Naive thymus-derived CD4-positive, alpha-beta T cell (primary cell): ENCODE measurements at regions of chr3 and their contacts with region 1.

Region 1: DNA sequence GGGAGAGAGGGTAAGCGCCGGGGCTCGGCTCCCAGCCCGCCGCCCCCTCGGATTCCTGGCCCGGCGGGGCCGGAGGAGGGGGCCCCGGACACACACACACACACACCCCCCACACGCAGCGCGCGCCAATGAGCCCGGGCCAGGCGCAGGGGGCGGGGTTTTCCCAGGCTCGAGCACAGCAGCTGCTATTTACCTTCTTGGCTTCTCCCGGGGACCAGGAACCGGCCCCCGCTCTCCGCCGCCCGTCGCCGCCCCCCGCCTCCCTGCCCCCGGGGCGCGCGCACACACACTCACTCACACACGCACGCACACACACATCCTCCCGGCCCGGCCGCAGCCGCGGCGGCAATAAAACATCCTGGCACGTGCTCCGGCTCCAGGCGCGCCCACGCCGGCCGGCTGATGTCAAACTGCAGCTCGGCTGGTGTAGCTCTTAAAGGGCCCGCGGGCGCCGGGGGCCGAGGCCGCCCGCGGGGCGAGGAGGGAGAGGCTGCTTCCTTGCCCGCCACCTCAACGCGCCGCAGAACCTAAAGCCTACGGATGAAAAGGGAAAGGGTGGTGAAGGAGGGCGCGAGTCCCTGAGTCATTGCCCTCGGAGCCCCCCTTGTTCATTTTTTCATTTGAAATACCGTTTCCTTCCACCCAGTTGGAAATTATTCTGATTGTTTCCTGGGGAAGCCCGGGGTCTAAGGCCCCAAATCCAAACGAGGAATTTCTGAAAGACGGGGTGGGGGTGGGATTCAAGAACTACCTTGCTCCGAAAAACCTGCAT is 1.0 kb upstream of the HES1 start:
- DNase-seq: peak; percentile 66 to 84 (median 82)
- ATAC-seq: peak; percentile 79
- H3K4me3 ChIP-seq: peak overlapping the region; percentile 53
- H3K4me3 Mint-ChIP-seq: peak overlapping the region; percentile 84 to 93 (median 90)
- H3K27ac ChIP-seq: peak overlapping the region; percentile 8
- H3K27ac Mint-ChIP-seq: peak overlapping the region in 8 of 9 donors; percentile 79 to 94 (median 92)
- H3K4me1 ChIP-seq: peaks cover 25 to 42% of the 10 kb centered on the region in 2 donors
- H3K4me1 Mint-ChIP-seq: peaks cover 41 to 66% (median 50%) of the 10 kb centered on the region in 7 donors
- H3K27me3 ChIP-seq: peaks cover 6 to 8% of the 10 kb centered on the region in 2 donors
- H3K27me3 Mint-ChIP-seq: peaks cover 0 to 80% (median 34%) of the 10 kb centered on the region in 5 donors

Region 2: GRCh38 chr3:192892981-192893700 is 1241.8 kb before region 1 on chr3:
- CTCF ChIA-PET with region 1: no interaction called
- POLR2A ChIA-PET with region 1: no interaction called
- intact Hi-C with region 1: loop called in 1 of 2 experiments (anchors 10 kb)
- DNase-seq: peak in 8 of 9 donors; percentile 20 to 68 (median 41)
- ATAC-seq: peak; percentile 89
- H3K4me3 ChIP-seq: peak overlapping the region; percentile 29
- H3K4me3 Mint-ChIP-seq: peak overlapping the region; percentile 39 to 87 (median 74)
- H3K27ac ChIP-seq: peak overlapping the region; percentile 73
- H3K27ac Mint-ChIP-seq: peak overlapping the region; percentile 77 to 95 (median 91)
- H3K4me1 ChIP-seq: peaks cover 4 to 21% of the 10 kb centered on the region in 2 donors
- H3K4me1 Mint-ChIP-seq: peaks cover 15 to 91% (median 46%) of the 10 kb centered on the region in 7 donors
- H3K27me3 ChIP-seq: no peaks in the 10 kb centered on the region
- H3K27me3 Mint-ChIP-seq: peaks cover 0 to 20% (median 3%) of the 10 kb centered on the region in 5 donors

Region 3: DNA sequence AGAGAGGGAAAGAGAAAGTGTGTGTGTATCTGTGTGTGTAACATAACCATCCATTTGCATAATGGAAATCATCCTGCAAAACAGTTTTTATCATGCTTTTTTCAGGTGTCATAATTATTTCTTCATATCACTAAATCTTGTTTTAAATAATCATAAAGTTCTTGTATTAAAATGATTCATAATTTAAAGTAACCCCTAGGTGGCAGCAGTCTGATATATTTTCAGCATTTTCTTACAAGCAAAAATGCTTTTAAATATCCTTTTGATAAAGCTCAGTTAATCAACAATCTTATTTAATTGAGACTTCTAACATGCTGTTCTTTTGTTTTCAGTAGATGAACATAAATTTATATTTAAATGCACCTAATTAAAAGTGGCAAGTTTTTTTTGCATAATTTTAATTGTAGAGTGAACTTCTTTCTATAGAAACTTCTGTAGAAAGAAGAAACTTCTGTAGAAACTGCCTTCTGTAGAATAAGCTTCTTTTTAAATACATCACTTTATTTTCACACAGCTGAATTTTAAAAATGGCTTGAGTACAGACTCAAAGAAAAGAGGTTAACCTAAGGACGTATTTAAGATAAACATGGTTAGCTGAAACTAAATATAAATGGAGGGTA is 469.5 kb before region 1 on chr3:
- CTCF ChIA-PET with region 1: interaction called, 12 read pairs
- POLR2A ChIA-PET with region 1: no interaction called
- intact Hi-C with region 1: loop called in 1 of 2 experiments (anchors 5 kb)
- DNase-seq: peak in 6 of 9 donors; percentile 4 to 43 (median 24)
- ATAC-seq: no peak
- H3K4me3 ChIP-seq: no peak overlapping the region
- H3K4me3 Mint-ChIP-seq: no peak overlapping the region
- H3K27ac ChIP-seq: no peak overlapping the region
- H3K27ac Mint-ChIP-seq: no peak overlapping the region
- H3K4me1 ChIP-seq: no peaks in the 10 kb centered on the region
- H3K4me1 Mint-ChIP-seq: no peaks in the 10 kb centered on the region
- H3K27me3 ChIP-seq: no peaks in the 10 kb centered on the region
- H3K27me3 Mint-ChIP-seq: no peaks in the 10 kb centered on the region

Region 4: GRCh38 chr3:193971261-193971751 is 163.6 kb before region 1 on chr3:
- CTCF ChIA-PET with region 1: no interaction called
- POLR2A ChIA-PET with region 1: no interaction called
- intact Hi-C with region 1: loop called (anchors 1 to 10 kb)
- DNase-seq: no peak
- ATAC-seq: peak; percentile 86
- H3K4me3 ChIP-seq: no peak overlapping the region
- H3K4me3 Mint-ChIP-seq: peak overlapping the region in 7 of 10 donors; percentile 18 to 67 (median 51)
- H3K27ac ChIP-seq: no peak overlapping the region
- H3K27ac Mint-ChIP-seq: no peak overlapping the region
- H3K4me1 ChIP-seq: peaks cover 0 to 10% of the 10 kb centered on the region in 2 donors
- H3K4me1 Mint-ChIP-seq: peaks cover 0 to 28% (median 20%) of the 10 kb centered on the region in 7 donors
- H3K27me3 ChIP-seq: no peaks in the 10 kb centered on the region
- H3K27me3 Mint-ChIP-seq: peaks cover 6 to 74% (median 24%) of the 10 kb centered on the region in 5 donors

Region 5: DNA sequence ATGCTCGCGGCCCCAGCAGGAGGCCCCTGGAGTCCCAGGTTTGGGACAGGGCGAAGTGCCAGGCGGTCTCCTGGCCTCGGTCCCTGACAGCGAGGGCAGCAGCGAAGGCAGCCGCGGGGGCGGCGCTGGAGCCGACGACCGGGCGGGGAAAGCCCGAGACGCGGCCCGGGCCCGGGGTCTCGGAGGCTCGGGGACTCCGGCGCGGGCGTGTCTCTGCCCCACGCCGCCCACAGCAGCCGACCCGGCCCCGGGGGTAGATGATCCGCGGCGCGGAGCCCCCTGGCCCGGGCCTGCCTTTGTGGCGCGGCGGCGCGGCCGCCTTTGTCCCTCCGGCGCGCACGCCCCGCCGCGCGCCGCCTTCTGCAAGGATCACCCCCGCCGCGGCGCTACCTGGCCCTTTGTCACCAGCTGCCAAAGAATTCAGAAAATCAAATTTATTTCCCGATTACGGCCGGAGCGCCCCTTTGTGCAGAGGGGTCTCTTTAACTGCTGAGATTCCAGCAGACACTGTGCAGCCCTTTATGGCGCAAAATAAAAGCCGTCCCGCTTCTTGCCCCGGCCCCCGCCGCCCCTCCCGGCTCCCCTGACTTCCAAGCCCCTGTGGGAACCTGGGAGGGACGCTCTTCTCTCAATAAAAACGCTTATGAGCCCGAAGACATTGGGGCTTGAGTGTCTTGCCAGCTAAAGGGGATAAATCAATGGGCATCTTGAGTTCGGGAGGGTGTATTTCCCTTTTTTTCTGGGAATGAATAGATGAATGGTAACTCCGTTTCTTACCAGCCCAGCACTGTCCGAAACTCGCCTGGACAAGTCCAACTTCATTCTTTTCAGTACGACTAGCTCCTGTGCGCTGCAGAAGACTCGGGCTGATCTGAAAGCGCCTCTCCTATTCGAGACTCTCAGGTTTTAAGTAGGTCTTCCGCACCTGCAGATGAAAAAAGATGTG is 69.4 kb after region 1 on chr3:
- CTCF ChIA-PET with region 1: no interaction called
- POLR2A ChIA-PET with region 1: no interaction called
- intact Hi-C with region 1: loop called (anchors 2 kb)
- DNase-seq: peak in 4 of 9 donors; percentile 4 to 38 (median 12)
- ATAC-seq: peak; percentile 52
- H3K4me3 ChIP-seq: peak overlapping the region; percentile 53
- H3K4me3 Mint-ChIP-seq: peak overlapping the region; percentile 85 to 95 (median 90)
- H3K27ac ChIP-seq: peak overlapping the region; percentile 18
- H3K27ac Mint-ChIP-seq: peak overlapping the region in 8 of 9 donors; percentile 48 to 92 (median 74)
- H3K4me1 ChIP-seq: peaks cover 0 to 9% of the 10 kb centered on the region in 2 donors
- H3K4me1 Mint-ChIP-seq: peaks cover 10 to 39% (median 30%) of the 10 kb centered on the region in 7 donors
- H3K27me3 ChIP-seq: peaks cover 0 to 6% of the 10 kb centered on the region in 2 donors
- H3K27me3 Mint-ChIP-seq: peaks cover 0 to 34% (median 17%) of the 10 kb centered on the region in 5 donors

Region 6: GRCh38 chr3:194315088-194315964 is 180.4 kb after region 1 on chr3:
- CTCF ChIA-PET with region 1: interaction called, 7 read pairs
- POLR2A ChIA-PET with region 1: interaction called, 3 read pairs
- intact Hi-C with region 1: loop called (anchors 2 kb)
- DNase-seq: peak; percentile 55 to 90 (median 81)
- ATAC-seq: peak; percentile 95
- H3K4me3 ChIP-seq: peak overlapping the region; percentile 65
- H3K4me3 Mint-ChIP-seq: peak overlapping the region; percentile 69 to 92 (median 87)
- H3K27ac ChIP-seq: no peak overlapping the region
- H3K27ac Mint-ChIP-seq: peak overlapping the region in 3 of 9 donors; percentile 19 to 68 (median 27)
- H3K4me1 ChIP-seq: peaks cover 9 to 14% of the 10 kb centered on the region in 2 donors
- H3K4me1 Mint-ChIP-seq: peaks cover 5 to 47% (median 9%) of the 10 kb centered on the region in 7 donors
- H3K27me3 ChIP-seq: peaks cover 0 to 6% of the 10 kb centered on the region in 2 donors
- H3K27me3 Mint-ChIP-seq: peaks cover 0 to 18% (median 16%) of the 10 kb centered on the region in 5 donors

Region 7: DNA sequence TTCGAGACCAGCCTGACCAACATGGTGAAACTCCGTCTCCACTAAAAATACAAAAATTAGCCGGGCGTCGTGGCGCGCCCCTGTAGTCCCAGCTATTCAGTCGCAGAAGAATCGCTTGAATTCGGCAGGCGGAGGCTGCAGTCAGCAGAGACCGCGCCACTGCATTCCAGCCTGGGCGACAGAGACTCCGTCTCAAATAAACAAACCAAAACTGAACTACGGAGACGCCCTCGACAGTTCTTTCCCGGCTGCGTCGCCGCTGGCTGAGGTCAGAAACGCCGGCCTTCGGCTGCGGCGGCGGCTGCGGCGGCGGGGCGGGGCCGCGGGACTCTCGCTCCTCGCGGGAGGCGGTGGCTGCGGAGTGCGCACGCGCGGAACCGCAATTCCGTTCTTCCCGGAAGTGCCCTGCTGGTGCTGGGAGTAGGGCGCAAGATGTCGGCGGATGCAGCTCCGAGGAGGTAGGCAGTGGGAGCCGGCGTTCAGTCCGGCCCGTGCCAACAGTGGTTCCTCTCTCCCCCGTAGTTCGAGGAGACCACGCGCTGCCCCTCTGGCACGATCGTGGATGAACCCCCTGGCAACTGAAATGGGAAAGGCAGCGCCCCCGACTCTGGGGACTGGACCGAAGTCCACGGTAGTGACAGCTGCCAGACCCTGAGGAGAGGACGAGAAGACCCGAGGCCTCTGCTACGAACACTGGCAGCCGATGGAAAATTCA is 448.8 kb after region 1 on chr3:
- CTCF ChIA-PET with region 1: no interaction called
- POLR2A ChIA-PET with region 1: no interaction called
- intact Hi-C with region 1: loop called in 1 of 2 experiments (anchors 10 kb)
- DNase-seq: peak; percentile 87 to 98 (median 92)
- ATAC-seq: peak; percentile 92
- H3K4me3 ChIP-seq: peak overlapping the region; percentile 81
- H3K4me3 Mint-ChIP-seq: peak overlapping the region; percentile 84 to 96 (median 93)
- H3K27ac ChIP-seq: peak overlapping the region; percentile 79
- H3K27ac Mint-ChIP-seq: peak overlapping the region; percentile 93 to 99 (median 96)
- H3K4me1 ChIP-seq: peaks cover 8 to 11% of the 10 kb centered on the region in 2 donors
- H3K4me1 Mint-ChIP-seq: peaks cover 8 to 30% (median 12%) of the 10 kb centered on the region in 7 donors
- H3K27me3 ChIP-seq: no peaks in the 10 kb centered on the region
- H3K27me3 Mint-ChIP-seq: no peaks in the 10 kb centered on the region